ENCODE measurements at regions of chr3 and their contacts with region 1.

Region 1: GRCh38 chr3:51024765-51025632 is 350.3 kb downstream of the DOCK3 start:
- DNase-seq: peak; percentile 41 to 89 (median 75)
- ATAC-seq: peak; percentile 95 to 97
- H3K4me3 Mint-ChIP-seq: peak overlapping the region; percentile 68 to 87 (median 80)
- H3K27ac Mint-ChIP-seq: peak overlapping the region; percentile 91 to 99 (median 96)
- H3K4me1 Mint-ChIP-seq: peaks cover 40 to 69% (median 53%) of the 10 kb centered on the region in 4 donors
- H3K27me3 Mint-ChIP-seq: no peaks in the 10 kb centered on the region

Region 2: DNA sequence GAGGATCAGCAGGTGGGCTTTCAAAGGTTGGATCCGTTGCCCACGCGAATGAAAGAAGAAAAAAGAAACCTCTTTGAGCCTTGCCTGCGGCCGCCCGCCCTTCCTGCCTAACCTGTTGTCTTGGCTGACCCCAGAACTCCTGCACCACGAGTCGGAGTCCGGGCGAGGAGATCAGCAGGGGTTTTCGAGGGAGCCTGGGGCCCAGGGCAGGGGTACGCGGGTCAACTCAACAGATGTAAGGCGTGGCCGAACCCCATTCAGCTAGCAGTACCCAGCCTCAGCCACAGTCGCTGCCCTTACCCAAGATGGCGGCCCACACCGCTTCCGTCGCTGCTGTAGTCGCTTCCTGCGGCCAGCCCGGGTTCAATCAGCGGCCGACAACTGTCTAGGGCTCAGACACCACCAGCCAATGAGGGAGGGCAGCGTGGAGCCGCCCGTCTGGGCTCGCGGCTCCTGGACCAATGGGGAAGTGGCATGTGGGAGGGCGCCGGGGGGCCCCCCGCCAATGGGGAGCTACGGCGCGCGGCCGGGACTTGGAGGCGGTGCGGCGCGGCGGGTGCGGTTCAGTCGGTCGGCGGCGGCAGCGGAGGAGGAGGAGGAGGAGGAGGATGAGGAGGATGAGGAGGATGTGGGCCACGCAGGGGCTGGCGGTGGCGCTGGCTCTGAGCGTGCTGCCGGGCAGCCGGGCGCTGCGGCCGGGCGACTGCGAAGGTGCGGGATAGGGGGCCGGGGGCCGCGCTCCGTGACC is 359.9 kb after region 1 on chr3 and contains the start of gene MANF:
- POLR2A ChIA-PET with region 1: interaction called, 10 read pairs
- DNase-seq: peak; percentile 92 to 98 (median 97)
- ATAC-seq: peak; percentile 95 to 96
- H3K4me3 Mint-ChIP-seq: peak within 1 kb of the TSS; percentile 96 to 100 (median 99)
- H3K27ac Mint-ChIP-seq: peak within 1 kb of the TSS; percentile 97 to 100 (median 99)
- H3K4me1 Mint-ChIP-seq: peaks cover 20 to 52% (median 51%) of the 10 kb centered on the region in 4 donors
- H3K27me3 Mint-ChIP-seq: no peaks in the 10 kb centered on the region
- polyA plus RNA-seq, gene MANF: 41.6 to 45.3 (median 44.4) TPM